HepG2 (cell line): ENCODE measurements at regions of chr15 and their contacts with region 1.

Region 1: GRCh38 chr15:72375847-72376581 is at the start of gene HEXA:
- DNase-seq: peak; percentile 93
- ATAC-seq: peak; percentile 97
- H3K4me3 ChIP-seq: peak within 1 kb of the TSS; percentile 74 to 93 (median 93)
- H3K27ac ChIP-seq: peak within 1 kb of the TSS; percentile 84
- H3K4me1 ChIP-seq: peaks cover 39% of the 10 kb centered on the region
- H3K27me3 ChIP-seq: no peaks in the 10 kb centered on the region
- CTCF ChIP-seq: no peak; the same call in 1 of the 2 replicates
- EP300 ChIP-seq: peak in 1 of 2 experiments; percentile 64; a peak in 2 of 4 replicates
- POLR2A ChIP-seq: peak; percentile 94
- RAD21 ChIP-seq: peak; percentile 28; the same call in 1 of the 2 replicates
- total RNA-seq, gene HEXA: 47.4 and 106 TPM in 2 replicates

Region 2: DNA sequence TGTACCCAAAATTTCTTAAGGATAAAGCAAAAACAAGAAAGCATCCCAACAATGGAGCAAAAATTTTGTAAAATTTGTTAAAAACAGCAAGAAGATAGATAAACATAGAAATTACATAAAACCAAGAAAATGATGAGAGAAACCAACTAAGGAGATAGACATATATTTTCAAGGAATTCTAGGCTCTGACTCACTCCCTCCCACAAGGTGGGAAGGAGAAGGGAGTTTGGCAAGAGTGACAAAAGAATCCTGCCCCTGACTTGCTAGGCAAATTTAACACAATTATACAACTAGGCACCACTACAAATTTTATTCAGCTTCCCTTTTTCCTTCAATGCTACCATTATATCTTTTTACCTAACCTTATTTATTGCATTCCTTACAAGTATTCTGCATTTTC is 329.0 kb before region 1 on chr15:
- CTCF ChIA-PET with region 1: no interaction called
- POLR2A ChIA-PET with region 1: no interaction called
- in situ Hi-C with region 1: no loop called
- intact Hi-C with region 1: no loop called
- DNase-seq: no peak
- ATAC-seq: no peak
- H3K4me3 ChIP-seq: no peak overlapping the region
- H3K27ac ChIP-seq: no peak overlapping the region
- H3K4me1 ChIP-seq: no peaks in the 10 kb centered on the region
- H3K27me3 ChIP-seq: no peaks in the 10 kb centered on the region
- CTCF ChIP-seq: no peak
- EP300 ChIP-seq: no peak
- POLR2A ChIP-seq: no peak
- RAD21 ChIP-seq: no peak

Region 3: GRCh38 chr15:72397796-72398588 is 22.0 kb after region 1 on chr15 and contains the start of gene TMEM202:
- CTCF ChIA-PET with region 1: no interaction called
- POLR2A ChIA-PET with region 1: interaction called, 11 read pairs
- in situ Hi-C with region 1: no loop called
- intact Hi-C with region 1: no loop called
- DNase-seq: no peak
- ATAC-seq: no peak
- H3K4me3 ChIP-seq: peak within 1 kb of the TSS in 1 of 3 experiments; percentile 18; a peak in 1 of 6 replicates
- H3K27ac ChIP-seq: no peak within 1 kb of the TSS
- H3K4me1 ChIP-seq: peaks cover 21% of the 10 kb centered on the region
- H3K27me3 ChIP-seq: peaks cover 0 to 8% of the 10 kb centered on the region in 2 experiments; a peak in 2 of 5 replicates
- CTCF ChIP-seq: no peak
- EP300 ChIP-seq: no peak
- POLR2A ChIP-seq: no peak
- RAD21 ChIP-seq: no peak
- total RNA-seq, gene TMEM202: not detected in 2 replicates

Region 4: GRCh38 chr15:72445426-72445825 is 69.4 kb after region 1 on chr15:
- CTCF ChIA-PET with region 1: no interaction called
- POLR2A ChIA-PET with region 1: no interaction called
- in situ Hi-C with region 1: no loop called
- intact Hi-C with region 1: no loop called
- DNase-seq: no peak
- ATAC-seq: no peak
- H3K4me3 ChIP-seq: no peak overlapping the region
- H3K27ac ChIP-seq: no peak overlapping the region
- H3K4me1 ChIP-seq: 0 out of 2 replicates have a peak, but pooled peaks cover under 1% of the 10 kb centered on the region
- H3K27me3 ChIP-seq: no peaks in the 10 kb centered on the region; a peak in 1 of 5 replicates
- CTCF ChIP-seq: no peak
- EP300 ChIP-seq: no peak
- POLR2A ChIP-seq: no peak
- RAD21 ChIP-seq: no peak

Region 5: GRCh38 chr15:72473614-72474465 is 97.8 kb after region 1 on chr15 and contains the start of gene ARIH1:
- CTCF ChIA-PET with region 1: no interaction called
- POLR2A ChIA-PET with region 1: interaction called, 10 read pairs
- in situ Hi-C with region 1: no loop called
- intact Hi-C with region 1: loop called (anchors 1 kb)
- DNase-seq: peak; percentile 87
- ATAC-seq: peak; percentile 90
- H3K4me3 ChIP-seq: peak within 1 kb of the TSS; percentile 84 to 91 (median 90)
- H3K27ac ChIP-seq: peak within 1 kb of the TSS; percentile 99
- H3K4me1 ChIP-seq: peaks cover 35% of the 10 kb centered on the region
- H3K27me3 ChIP-seq: no peaks in the 10 kb centered on the region; a peak in 1 of 5 replicates
- CTCF ChIP-seq: peak; percentile 42
- EP300 ChIP-seq: peak in 1 of 2 experiments; percentile 31; a peak in 2 of 4 replicates
- POLR2A ChIP-seq: peak; percentile 88 to 94
- RAD21 ChIP-seq: 0 out of 2 replicates have a peak, but pooled peaks have one; percentile 10
- total RNA-seq, gene ARIH1: 59.8 and 86.6 TPM in 2 replicates

Region 6: GRCh38 chr15:72732516-72732915 is 356.5 kb after region 1 on chr15:
- CTCF ChIA-PET with region 1: no interaction called
- POLR2A ChIA-PET with region 1: no interaction called
- in situ Hi-C with region 1: no loop called
- intact Hi-C with region 1: no loop called
- DNase-seq: no peak
- ATAC-seq: peak; percentile 62; the same call in 2 of the 3 replicates
- H3K4me3 ChIP-seq: no peak overlapping the region
- H3K27ac ChIP-seq: no peak overlapping the region
- H3K4me1 ChIP-seq: peaks cover 3% of the 10 kb centered on the region
- H3K27me3 ChIP-seq: no peaks in the 10 kb centered on the region
- CTCF ChIP-seq: no peak
- EP300 ChIP-seq: no peak
- POLR2A ChIP-seq: no peak
- RAD21 ChIP-seq: no peak